Gastrocnemius medialis (tissue), 4 donors: ENCODE measurements at regions of chr14 and their contacts with region 1.

Region 1: GRCh38 chr14:50954811-50955372 is 10.6 kb upstream of the PYGL start:
- DNase-seq: no peak
- ATAC-seq: peak; percentile 74 to 81
- H3K4me3 ChIP-seq: no peak overlapping the region
- H3K27ac ChIP-seq: no peak overlapping the region
- H3K4me1 ChIP-seq: peaks cover 0 to 10% of the 10 kb centered on the region in 2 donors
- H3K27me3 ChIP-seq: no peaks in the 10 kb centered on the region
- CTCF ChIP-seq: peak; percentile 42 to 69 (median 48)
- POLR2A ChIP-seq: no peak

Region 2: GRCh38 chr14:50425816-50426215 is 529.1 kb before region 1 on chr14:
- in situ Hi-C with region 1: no loop called
- intact Hi-C with region 1: no loop called
- DNase-seq: no peak
- ATAC-seq: no peak
- H3K4me3 ChIP-seq: no peak overlapping the region
- H3K27ac ChIP-seq: no peak overlapping the region
- H3K4me1 ChIP-seq: no peaks in the 10 kb centered on the region
- H3K27me3 ChIP-seq: no peaks in the 10 kb centered on the region
- CTCF ChIP-seq: no peak
- POLR2A ChIP-seq: no peak

Region 3: DNA sequence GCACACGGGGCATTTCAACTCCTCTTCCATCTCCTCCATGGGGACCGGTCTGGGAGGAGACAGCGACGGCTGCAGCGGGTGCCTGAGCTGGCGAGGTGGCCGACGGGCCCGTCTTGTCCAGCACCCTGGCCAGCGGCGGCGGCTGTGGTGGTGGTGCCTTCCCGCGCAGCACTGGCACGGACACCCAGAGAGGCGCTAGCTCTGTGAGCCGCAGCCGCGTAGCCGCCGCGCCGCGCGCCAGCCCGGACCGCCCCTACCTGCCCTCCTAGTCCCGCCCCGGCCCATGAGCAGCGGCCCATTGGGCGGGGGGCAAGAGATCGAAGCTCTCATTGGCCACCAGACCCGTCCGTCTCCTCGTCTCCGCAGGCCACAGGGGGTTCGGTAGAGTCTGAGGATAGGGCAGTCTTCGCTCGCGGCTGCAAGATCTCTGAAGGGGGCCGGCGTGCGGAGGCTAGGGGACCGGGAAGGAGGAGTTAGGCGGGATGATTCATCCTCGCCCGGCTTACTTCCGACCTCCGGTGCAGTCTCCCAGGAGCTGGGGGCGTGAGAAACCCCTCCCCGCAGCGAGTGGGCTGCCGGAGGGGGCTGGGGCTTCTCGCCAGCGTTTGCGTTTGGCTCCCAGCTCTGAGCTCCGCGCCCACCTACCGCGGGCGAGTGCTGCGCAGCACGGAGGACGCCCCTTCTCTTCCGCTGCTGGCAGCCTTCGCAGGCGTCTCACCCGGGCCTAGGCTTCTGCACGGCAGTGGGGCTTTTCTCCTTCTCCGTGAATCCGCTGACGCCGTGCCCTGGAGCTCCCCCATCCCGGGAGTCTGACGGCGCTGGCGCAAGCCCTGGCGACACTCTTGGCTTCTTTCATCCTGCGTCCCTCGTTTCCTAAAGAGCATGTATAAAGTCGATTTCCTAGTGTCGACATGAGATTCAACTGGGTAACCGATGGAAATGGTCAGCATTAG is 140.3 kb after region 1 on chr14 and contains the start of gene TRIM9:
- in situ Hi-C with region 1: no loop called
- intact Hi-C with region 1: loop called (anchors 2 kb)
- DNase-seq: peak; percentile 89 to 90
- ATAC-seq: peak; percentile 92 to 95
- H3K4me3 ChIP-seq: peak within 1 kb of the TSS; percentile 72 to 86 (median 80)
- H3K27ac ChIP-seq: peak within 1 kb of the TSS; percentile 58 to 67 (median 62)
- H3K4me1 ChIP-seq: peaks cover 14 to 28% of the 10 kb centered on the region in 2 donors
- H3K27me3 ChIP-seq: peaks cover 17 to 29% (median 25%) of the 10 kb centered on the region in 3 donors
- CTCF ChIP-seq: no peak
- POLR2A ChIP-seq: peak; percentile 18 to 46
- total RNA-seq, gene TRIM9: 0.26 to 3.0 (median 0.87) TPM

Region 4: GRCh38 chr14:51219473-51220448 is 264.9 kb after region 1 on chr14:
- in situ Hi-C with region 1: loop called in 3 of 4 experiments (anchors 10 to 25 kb)
- intact Hi-C with region 1: loop called (anchors 2 kb)
- DNase-seq: no peak
- ATAC-seq: no peak
- H3K4me3 ChIP-seq: no peak overlapping the region
- H3K27ac ChIP-seq: no peak overlapping the region
- H3K4me1 ChIP-seq: no peaks in the 10 kb centered on the region
- H3K27me3 ChIP-seq: no peaks in the 10 kb centered on the region
- CTCF ChIP-seq: peak; percentile 19 to 64 (median 55)
- POLR2A ChIP-seq: no peak

Region 5: GRCh38 chr14:51239813-51240803 is 285.2 kb after region 1 on chr14 and contains the start of gene TMX1:
- in situ Hi-C with region 1: loop called in 1 of 4 experiments (anchors 25 kb)
- intact Hi-C with region 1: no loop called
- DNase-seq: peak; percentile 94 to 98
- ATAC-seq: peak; percentile 100
- H3K4me3 ChIP-seq: peak within 1 kb of the TSS; percentile 89 to 98 (median 94)
- H3K27ac ChIP-seq: peak within 1 kb of the TSS; percentile 81 to 90 (median 88)
- H3K4me1 ChIP-seq: peaks cover 11 to 21% of the 10 kb centered on the region in 2 donors
- H3K27me3 ChIP-seq: no peaks in the 10 kb centered on the region
- CTCF ChIP-seq: no peak
- POLR2A ChIP-seq: peak; percentile 70 to 80
- total RNA-seq, gene TMX1: 13.5 to 17.3 (median 15.7) TPM

Region 6: DNA sequence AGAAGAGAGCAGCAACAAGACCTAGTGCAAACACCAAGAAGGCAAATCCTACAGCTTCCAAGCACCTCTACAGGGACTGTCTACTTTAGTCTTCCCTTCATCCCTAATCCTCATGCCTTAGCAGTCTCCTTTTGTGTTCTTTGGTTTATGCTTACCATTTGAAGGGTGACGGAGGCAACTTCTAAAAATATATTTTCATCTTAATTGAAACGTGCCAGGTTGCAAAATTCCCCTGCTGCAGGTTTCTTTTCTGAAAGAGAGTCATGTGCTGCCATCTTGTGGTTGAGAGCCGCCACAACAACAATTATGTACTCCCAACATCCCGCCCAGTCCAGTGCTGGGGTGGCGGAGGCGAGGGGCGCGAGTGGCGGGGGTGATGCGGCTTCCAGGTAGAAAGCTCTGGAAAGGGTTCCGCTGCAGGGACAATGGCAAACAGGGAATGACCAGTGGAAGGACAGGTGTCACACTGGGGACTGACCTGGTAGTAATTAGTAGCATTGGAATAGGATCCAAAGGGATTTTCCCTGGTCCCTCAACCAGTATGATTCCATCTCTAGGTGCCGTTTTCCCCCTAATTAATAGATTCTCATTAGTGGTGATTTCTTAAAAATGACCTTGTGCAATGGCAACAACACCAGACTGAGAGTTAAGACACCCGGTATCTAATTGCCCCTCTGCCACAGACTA is 825.3 kb after region 1 on chr14:
- in situ Hi-C with region 1: loop called in 2 of 4 experiments (anchors 25 kb)
- intact Hi-C with region 1: no loop called
- DNase-seq: peak; percentile 25 to 59
- ATAC-seq: peak; percentile 54 to 81
- H3K4me3 ChIP-seq: no peak overlapping the region
- H3K27ac ChIP-seq: no peak overlapping the region
- H3K4me1 ChIP-seq: no peaks in the 10 kb centered on the region
- H3K27me3 ChIP-seq: no peaks in the 10 kb centered on the region
- CTCF ChIP-seq: peak; percentile 47 to 87 (median 83)
- POLR2A ChIP-seq: no peak